ENCODE measurements at regions of chr9 and their contacts with region 1.

Region 1: GRCh38 chr9:38026021-38026809 is 42.8 kb downstream of the SHB start:
- DNase-seq: no peak
- H3K4me3 ChIP-seq: no peak overlapping the region
- H3K27ac ChIP-seq: no peak overlapping the region
- H3K4me1 ChIP-seq: peaks cover 34 to 54% (median 40%) of the 10 kb centered on the region in 4 experiments
- H3K27me3 ChIP-seq: no peaks in the 10 kb centered on the region
- CTCF ChIP-seq: no peak
- EP300 ChIP-seq: no peak
- POLR2A ChIP-seq: no peak
- RAD21 ChIP-seq: no peak

Region 2: DNA sequence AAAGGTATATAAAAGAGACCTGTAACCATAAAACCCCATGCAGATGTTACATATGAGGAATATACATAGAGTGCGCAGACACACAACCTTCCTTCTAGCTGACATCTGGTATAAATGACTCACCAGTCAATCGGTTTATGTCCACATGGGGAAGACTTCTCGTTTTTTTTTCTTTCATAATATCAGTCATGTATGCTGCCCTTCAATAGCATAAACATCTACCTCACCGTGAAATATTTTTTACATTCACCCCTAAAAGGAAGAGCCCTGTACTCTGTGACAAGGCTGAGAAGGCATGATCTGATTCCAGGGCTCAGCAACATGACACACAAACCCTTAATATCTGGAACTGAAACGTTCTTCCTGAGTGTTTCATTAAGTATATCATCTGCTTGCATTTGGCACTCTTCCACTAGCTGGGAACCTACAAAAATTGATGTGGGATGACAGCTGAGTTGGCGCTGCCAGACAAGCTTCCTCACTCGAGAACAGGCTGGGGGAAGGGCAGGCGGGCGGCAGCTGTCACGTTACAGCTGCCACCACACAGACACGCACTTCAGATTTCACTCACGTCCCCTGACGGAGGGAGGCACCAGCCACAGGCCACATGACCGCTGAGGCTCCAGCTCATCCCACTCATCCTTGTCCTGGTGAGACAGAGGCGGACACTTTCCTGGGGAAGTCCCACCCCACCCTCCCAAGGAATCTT is 31.4 kb before region 1 on chr9:
- CTCF ChIA-PET with region 1: interaction called, 13 read pairs
- POLR2A ChIA-PET with region 1: interaction called, 3 read pairs
- DNase-seq: no peak
- H3K4me3 ChIP-seq: no peak overlapping the region
- H3K27ac ChIP-seq: no peak overlapping the region
- H3K4me1 ChIP-seq: peaks cover 0 to 15% (median 3%) of the 10 kb centered on the region in 4 experiments; a peak in 6 of 7 replicates
- H3K27me3 ChIP-seq: no peaks in the 10 kb centered on the region
- CTCF ChIP-seq: no peak
- EP300 ChIP-seq: no peak
- POLR2A ChIP-seq: no peak
- RAD21 ChIP-seq: no peak

Region 3: DNA sequence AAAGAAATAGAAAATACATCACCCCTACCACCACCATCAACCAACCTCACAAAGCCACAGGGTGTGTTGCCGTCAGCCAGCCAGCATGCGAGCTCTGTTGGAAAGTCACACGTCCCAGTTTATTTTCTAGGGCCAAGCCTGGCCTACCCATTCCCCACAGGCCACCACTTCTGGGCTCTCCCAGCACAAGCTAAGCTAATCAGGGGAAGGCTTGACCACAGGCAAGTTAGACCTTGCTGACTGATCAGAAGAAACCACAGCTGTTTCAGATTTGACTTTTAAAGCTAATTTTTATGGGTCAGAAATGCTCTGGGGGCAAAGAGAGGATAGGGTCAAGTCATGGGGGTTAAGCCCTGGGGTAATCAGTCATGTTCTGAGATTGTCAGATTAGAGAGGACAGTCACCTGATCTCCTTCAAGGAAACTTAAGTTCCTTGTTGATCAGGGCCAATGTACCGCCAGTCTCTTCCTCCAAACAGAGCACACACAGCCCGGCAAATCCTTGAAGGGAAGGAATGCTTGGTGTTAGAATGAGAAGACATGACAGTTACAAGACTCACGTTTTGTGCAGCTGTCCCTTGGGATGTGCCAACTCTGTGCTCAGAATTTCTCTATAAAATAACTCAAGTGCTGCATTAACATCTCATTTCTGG is 35.2 kb after region 1 on chr9:
- CTCF ChIA-PET with region 1: interaction called, 24 read pairs
- POLR2A ChIA-PET with region 1: interaction called, 3 read pairs
- DNase-seq: no peak
- H3K4me3 ChIP-seq: no peak overlapping the region
- H3K27ac ChIP-seq: no peak overlapping the region
- H3K4me1 ChIP-seq: peaks cover 15 to 31% (median 23%) of the 10 kb centered on the region in 4 experiments
- H3K27me3 ChIP-seq: peaks cover 0 to 1% (median 0%) of the 10 kb centered on the region in 4 experiments; a peak in 2 of 7 replicates
- CTCF ChIP-seq: no peak
- EP300 ChIP-seq: no peak
- POLR2A ChIP-seq: no peak
- RAD21 ChIP-seq: no peak

Region 4: GRCh38 chr9:38066914-38067610 is 40.8 kb after region 1 on chr9:
- CTCF ChIA-PET with region 1: interaction called, 24 read pairs
- POLR2A ChIA-PET with region 1: interaction called, 3 read pairs
- DNase-seq: no peak
- H3K4me3 ChIP-seq: peak overlapping the region; percentile 45 to 86 (median 56)
- H3K27ac ChIP-seq: no peak overlapping the region
- H3K4me1 ChIP-seq: peaks cover 3 to 44% (median 28%) of the 10 kb centered on the region in 4 experiments
- H3K27me3 ChIP-seq: peaks cover 0 to 16% (median 12%) of the 10 kb centered on the region in 4 experiments; a peak in 5 of 7 replicates
- CTCF ChIP-seq: no peak
- EP300 ChIP-seq: no peak
- POLR2A ChIP-seq: no peak
- RAD21 ChIP-seq: no peak; a peak in 1 of 4 replicates